ENCODE measurements at regions of chr7 and their contacts with region 1.

Region 1: GRCh38 chr7:41977151-41977651 is 259.8 kb downstream of the GLI3 start:
- DNase-seq: no peak
- H3K4me3 Mint-ChIP-seq: no peak overlapping the region
- H3K27ac Mint-ChIP-seq: no peak overlapping the region
- H3K4me1 Mint-ChIP-seq: no peaks in the 10 kb centered on the region
- H3K27me3 Mint-ChIP-seq: peaks cover 4% of the 10 kb centered on the region

Region 2: GRCh38 chr7:42876182-42877068 is 899.2 kb after region 1 on chr7:
- intact Hi-C with region 1: loop called (anchors 5 kb)
- DNase-seq: peak; percentile 86
- H3K4me3 Mint-ChIP-seq: no peak overlapping the region
- H3K27ac Mint-ChIP-seq: no peak overlapping the region
- H3K4me1 Mint-ChIP-seq: peaks cover 6% of the 10 kb centered on the region
- H3K27me3 Mint-ChIP-seq: peaks cover 5% of the 10 kb centered on the region

Measured in activated CD4-positive, alpha-beta T cell treated with anti-CD3 and anti-CD28 coated beads, Interleukin-2, amount 10 ng/mL, durations not matched to agents 24 days and 14 days (primary cell).